GM10248 (cell line): ENCODE measurements at regions of chr15 and their contacts with region 1.

Region 1: GRCh38 chr15:88345962-88346361 is 89.4 kb upstream of the NTRK3 start:
- DNase-seq: no peak
- CTCF ChIP-seq: no peak

Region 2: GRCh38 chr15:88331280-88331679 is 14.7 kb before region 1 on chr15:
- CTCF ChIA-PET with region 1: interaction called, 12 read pairs
- POLR2A ChIA-PET with region 1: no interaction called
- DNase-seq: peak; percentile 63
- CTCF ChIP-seq: peak; percentile 61